GM12878 (cell line): ENCODE measurements at regions of chrX and their contacts with region 1.

Region 1: DNA sequence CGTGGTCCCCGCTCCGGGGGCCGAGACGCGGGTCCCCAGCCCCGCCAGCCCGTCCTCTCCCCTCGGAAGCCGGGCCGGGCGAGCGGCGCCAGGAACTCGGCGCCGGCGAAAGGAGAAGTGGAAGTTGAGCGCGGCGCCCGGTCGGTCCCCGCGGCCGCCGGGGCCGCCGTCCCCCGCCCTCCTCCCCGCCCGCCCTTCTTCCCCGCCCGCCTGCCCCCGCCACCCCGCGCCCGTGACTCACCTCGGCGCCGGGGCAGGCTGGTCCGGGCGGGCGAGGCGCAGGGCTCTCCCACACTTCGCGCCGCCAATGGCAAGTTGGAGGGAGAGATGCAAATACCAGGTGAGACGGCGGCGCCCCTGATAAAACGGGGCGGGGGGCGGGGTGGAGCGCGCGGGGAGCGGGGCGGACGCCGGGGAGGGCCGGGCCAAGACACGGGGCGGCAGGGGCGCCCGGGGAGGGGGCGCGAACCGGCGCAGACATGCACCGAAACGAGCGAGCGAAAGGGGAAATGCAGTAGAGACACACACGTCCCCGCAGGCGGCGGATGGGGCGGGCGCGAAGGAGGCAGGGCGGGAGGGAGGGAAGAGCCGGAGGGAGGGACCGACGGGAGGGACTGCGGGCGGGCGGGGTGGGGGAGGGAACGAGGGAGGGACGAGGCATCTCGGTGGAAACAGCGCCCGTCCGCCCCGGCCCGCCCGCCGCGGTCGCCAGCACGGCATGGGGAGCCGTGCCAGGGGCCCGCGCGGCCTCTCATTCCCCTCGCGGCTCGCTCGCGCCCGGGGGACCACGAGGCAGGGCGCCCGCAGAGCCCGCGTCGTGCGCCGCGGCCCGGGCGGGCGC is at the start of gene ELF4:
- DNase-seq: no peak
- ATAC-seq: peak; percentile 39
- H3K4me3 ChIP-seq: peak within 1 kb of the TSS; percentile 66
- H3K27ac ChIP-seq: peak within 1 kb of the TSS; percentile 78
- H3K4me1 ChIP-seq: peaks cover 15% of the 10 kb centered on the region
- H3K27me3 ChIP-seq: no peaks in the 10 kb centered on the region; a peak in 1 of 4 replicates
- CTCF ChIP-seq: no peak
- EP300 ChIP-seq: no peak
- POLR2A ChIP-seq: peak; percentile 51; the same call in 1 of the 2 replicates
- RAD21 ChIP-seq: no peak
- polyA plus RNA-seq, gene ELF4: 4.0 to 5.2 TPM

Region 2: GRCh38 chrX:129945146-129945545 is 165.5 kb before region 1 on chrX:
- CTCF ChIA-PET with region 1: no interaction called
- POLR2A ChIA-PET with region 1: no interaction called
- RAD21 ChIA-PET with region 1: no interaction called
- SMC1A ChIA-PET with region 1: no interaction called
- in situ Hi-C with region 1: no loop called
- intact Hi-C with region 1: no loop called
- DNase-seq: no peak
- ATAC-seq: no peak
- H3K4me3 ChIP-seq: no peak overlapping the region
- H3K27ac ChIP-seq: no peak overlapping the region
- H3K4me1 ChIP-seq: no peaks in the 10 kb centered on the region
- H3K27me3 ChIP-seq: no peaks in the 10 kb centered on the region
- CTCF ChIP-seq: no peak
- EP300 ChIP-seq: no peak
- POLR2A ChIP-seq: no peak
- RAD21 ChIP-seq: no peak

Region 3: DNA sequence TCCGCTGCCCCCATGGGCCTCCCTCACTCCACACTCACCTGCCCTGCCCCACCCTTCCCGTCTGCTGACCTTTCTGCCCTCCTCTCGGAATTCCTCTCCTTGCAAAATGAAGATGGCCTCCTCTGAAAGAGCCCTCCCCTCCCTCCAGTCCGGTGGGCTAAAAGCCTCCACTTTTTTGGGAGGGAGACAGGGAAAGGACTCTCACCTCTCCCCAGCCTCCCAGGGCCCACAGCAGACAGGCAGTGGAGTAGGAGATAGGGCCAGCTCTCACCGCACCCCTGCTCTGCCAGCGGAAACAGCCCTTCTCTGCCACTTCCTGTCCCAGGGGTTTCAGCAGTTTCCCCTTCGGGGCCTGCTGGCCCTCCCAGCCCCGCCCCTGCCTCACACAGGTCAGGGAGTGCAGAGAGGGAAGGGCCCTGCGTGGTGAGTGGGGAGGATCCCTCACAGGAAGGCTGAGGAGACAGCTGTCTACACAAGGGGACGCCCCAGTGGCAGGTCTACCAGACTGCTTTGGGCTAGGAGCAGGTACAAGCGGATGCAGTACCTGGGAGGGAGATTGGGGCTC is 18.6 kb before region 1 on chrX:
- CTCF ChIA-PET with region 1: interaction called, 6 read pairs
- POLR2A ChIA-PET with region 1: interaction called, 27 read pairs
- RAD21 ChIA-PET with region 1: interaction called, 7 read pairs
- SMC1A ChIA-PET with region 1: interaction called, 36 read pairs
- in situ Hi-C with region 1: no loop called
- intact Hi-C with region 1: loop called (anchors 1 kb)
- DNase-seq: peak; percentile 81
- ATAC-seq: peak; percentile 97
- H3K4me3 ChIP-seq: peak overlapping the region; percentile 64; the same call in 1 of the 2 replicates
- H3K27ac ChIP-seq: peak overlapping the region; percentile 88
- H3K4me1 ChIP-seq: peaks cover 18% of the 10 kb centered on the region
- H3K27me3 ChIP-seq: no peaks in the 10 kb centered on the region
- CTCF ChIP-seq: peak; percentile 22 to 33 (median 28); a peak in 4 of 6 replicates
- EP300 ChIP-seq: no peak
- POLR2A ChIP-seq: peak; percentile 76
- RAD21 ChIP-seq: peak; percentile 36; the same call in 1 of the 2 replicates